Endothelial cell of umbilical vein (primary cell): ENCODE measurements at regions of chr1 and their contacts with region 1.

Region 1: DNA sequence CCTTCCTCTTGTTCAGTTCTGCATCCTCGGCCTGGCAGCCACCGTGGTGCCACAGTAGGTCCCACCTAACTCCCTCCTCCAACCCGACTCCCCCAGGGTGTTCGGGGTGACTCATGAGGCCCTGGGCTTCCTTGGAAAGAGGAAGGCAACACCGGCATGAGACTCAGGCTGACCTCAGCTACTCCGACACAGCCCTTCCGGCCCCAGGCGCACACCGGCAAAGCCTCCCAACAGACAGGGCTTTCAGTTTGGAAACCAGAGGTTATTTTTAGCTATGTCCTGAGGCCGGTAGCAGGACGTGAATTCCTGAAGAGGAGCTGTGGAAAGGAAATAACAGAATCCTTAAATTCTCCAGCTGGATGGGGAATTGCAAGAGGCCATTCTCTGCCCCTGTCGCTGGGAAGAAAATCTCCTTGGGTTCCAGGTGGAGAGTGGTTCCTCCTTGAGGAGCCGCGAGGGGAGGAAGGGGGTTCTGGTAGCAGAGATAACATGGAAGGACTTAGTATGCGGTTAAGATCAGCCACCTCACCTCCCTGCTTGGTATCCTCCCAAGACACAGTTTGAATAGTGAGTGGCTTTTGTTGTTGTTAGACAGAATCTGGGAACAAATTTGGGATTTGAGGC is 24.4 kb downstream of the PLXNA2 start:
- DNase-seq: peak; percentile 82
- H3K4me3 ChIP-seq: no peak overlapping the region
- H3K27ac ChIP-seq: peak overlapping the region; percentile 91
- H3K4me1 ChIP-seq: peaks cover 90% of the 10 kb centered on the region
- H3K27me3 ChIP-seq: no peaks in the 10 kb centered on the region
- CTCF ChIP-seq: no peak
- POLR2A ChIP-seq: peak; percentile 33

Region 2: DNA sequence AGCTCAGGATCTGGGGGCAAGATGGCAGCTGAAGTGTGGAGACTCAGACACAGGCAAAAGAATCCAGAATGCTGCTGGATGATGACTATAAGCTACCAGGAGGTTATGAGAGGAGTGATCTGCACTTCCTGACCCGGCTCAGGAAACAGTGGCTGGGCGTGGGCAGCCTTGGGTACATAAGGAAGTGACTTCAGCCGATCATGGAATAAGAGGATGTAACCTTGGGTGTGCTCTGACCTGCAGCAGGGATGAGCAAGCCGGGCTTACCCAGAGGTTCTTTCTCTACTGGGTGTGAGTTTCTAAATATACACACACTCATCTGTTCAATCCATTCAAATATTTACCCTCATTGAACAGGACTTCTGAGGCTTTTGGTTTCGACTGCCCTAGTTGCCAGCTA is 371.5 kb before region 1 on chr1:
- CTCF ChIA-PET with region 1: no interaction called
- POLR2A ChIA-PET with region 1: no interaction called
- dilution Hi-C with region 1: no loop called
- intact Hi-C with region 1: loop called (anchors 5 kb)
- DNase-seq: peak; percentile 90
- H3K4me3 ChIP-seq: peak overlapping the region in 1 of 3 experiments; percentile 6
- H3K27ac ChIP-seq: peak overlapping the region; percentile 90
- H3K4me1 ChIP-seq: peaks cover 40% of the 10 kb centered on the region
- H3K27me3 ChIP-seq: no peaks in the 10 kb centered on the region
- CTCF ChIP-seq: no peak
- POLR2A ChIP-seq: peak; percentile 78

Region 3: DNA sequence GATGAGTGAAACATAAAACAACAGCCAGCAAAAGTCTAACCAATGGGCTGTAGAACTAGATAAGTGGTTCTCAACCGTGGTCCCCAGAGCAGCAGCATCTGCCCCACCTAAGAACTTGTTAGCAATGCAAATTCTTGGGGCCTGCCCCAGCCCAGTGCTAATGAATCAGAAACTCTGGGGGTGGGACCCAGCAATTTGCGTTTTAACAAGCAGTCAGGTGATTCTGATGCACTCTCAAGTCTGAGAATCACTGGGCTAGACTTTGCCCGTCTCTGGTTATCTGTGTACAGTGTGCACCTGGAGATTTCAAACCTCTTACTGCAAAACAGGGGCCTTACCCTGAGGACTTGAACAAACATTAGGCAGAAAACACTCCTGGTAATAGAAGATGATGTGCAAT is 42.1 kb before region 1 on chr1:
- CTCF ChIA-PET with region 1: no interaction called
- POLR2A ChIA-PET with region 1: no interaction called
- dilution Hi-C with region 1: no loop called
- intact Hi-C with region 1: no loop called
- DNase-seq: no peak
- H3K4me3 ChIP-seq: no peak overlapping the region
- H3K27ac ChIP-seq: no peak overlapping the region
- H3K4me1 ChIP-seq: peaks cover 65% of the 10 kb centered on the region
- H3K27me3 ChIP-seq: no peaks in the 10 kb centered on the region
- CTCF ChIP-seq: no peak
- POLR2A ChIP-seq: no peak

Region 4: DNA sequence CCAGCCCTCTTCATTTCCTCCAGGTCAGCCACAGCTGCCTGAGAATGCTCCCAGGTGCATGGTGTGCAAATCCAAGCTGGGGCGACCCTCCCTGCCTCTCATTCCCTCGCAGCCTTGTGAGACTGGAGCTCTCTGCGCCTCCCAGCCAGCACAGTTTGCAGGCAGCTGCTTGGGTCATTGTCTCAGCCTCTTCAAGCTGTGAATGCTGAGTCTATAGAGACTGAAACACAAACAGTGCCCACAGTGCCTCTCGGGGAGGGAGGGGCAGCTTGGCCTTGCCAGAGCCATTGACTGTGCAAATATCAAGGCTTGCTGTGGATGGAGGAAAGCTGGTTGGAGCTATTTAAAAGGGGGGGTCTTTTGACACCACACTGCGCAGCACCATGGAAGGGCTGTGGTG is 13.8 kb after region 1 on chr1:
- CTCF ChIA-PET with region 1: interaction called, 714 read pairs
- POLR2A ChIA-PET with region 1: interaction called, 11 read pairs
- dilution Hi-C with region 1: no loop called
- intact Hi-C with region 1: loop called (anchors 1 kb)
- DNase-seq: peak; percentile 54
- H3K4me3 ChIP-seq: no peak overlapping the region
- H3K27ac ChIP-seq: peak overlapping the region; percentile 15
- H3K4me1 ChIP-seq: peaks cover 78% of the 10 kb centered on the region
- H3K27me3 ChIP-seq: no peaks in the 10 kb centered on the region
- CTCF ChIP-seq: no peak
- POLR2A ChIP-seq: no peak

Region 5: GRCh38 chr1:208309779-208310178 is 90.0 kb after region 1 on chr1:
- CTCF ChIA-PET with region 1: no interaction called
- POLR2A ChIA-PET with region 1: no interaction called
- dilution Hi-C with region 1: no loop called
- intact Hi-C with region 1: no loop called
- DNase-seq: no peak
- H3K4me3 ChIP-seq: no peak overlapping the region
- H3K27ac ChIP-seq: no peak overlapping the region
- H3K4me1 ChIP-seq: no peaks in the 10 kb centered on the region
- H3K27me3 ChIP-seq: no peaks in the 10 kb centered on the region
- CTCF ChIP-seq: no peak
- POLR2A ChIP-seq: no peak